ENCODE measurements at regions of chr19 and their contacts with region 1.

Region 1: DNA sequence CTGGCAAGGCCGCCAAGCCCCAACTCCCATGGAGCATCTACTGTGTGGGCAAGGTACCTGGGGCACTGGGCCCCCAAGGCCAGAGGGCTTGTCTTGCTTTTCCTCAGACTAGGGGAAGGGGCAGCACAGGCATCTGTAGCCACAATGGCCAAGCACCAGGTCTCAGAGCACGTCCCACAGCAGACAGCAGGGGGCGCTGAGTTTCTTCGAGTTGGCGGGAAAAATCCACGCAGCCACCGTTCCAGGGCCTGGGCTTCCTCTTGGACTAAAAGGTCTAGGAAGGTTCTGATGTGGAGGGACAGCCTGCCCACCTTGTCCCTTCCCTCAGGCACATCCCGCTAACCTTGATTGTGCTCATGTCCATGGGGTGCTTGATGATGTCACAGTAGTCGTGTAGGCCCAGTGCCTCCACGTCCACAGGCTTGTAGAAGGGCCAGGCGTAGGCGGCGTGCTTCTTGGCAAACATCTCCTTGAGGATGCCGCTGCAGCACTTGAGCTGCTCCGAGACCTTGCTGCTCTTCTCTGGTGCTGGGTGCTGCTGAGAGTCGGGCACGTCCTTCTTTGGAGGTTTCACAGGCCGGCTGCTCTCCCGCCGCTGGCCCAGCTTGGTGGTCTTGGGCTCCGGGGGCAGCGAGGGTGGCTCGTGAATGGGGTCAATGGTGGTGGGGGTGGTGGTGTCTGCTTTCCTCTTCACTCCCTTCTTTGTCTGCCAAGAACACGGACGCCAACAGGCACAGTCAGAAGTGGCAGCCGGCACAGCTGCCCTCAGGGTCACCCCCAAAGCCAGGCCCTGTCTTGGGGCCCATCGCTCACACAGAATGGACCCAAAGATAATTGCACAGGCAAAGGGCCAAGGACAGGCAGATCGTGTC is 32.0 kb upstream of the EPHX3 start:
- DNase-seq: peak in 1 of 2 donors; percentile 89
- H3K4me3 ChIP-seq: no peak overlapping the region
- H3K27ac ChIP-seq: peak overlapping the region; percentile 69 to 83
- H3K4me1 ChIP-seq: peaks cover 19 to 40% of the 10 kb centered on the region in 2 donors
- H3K27me3 ChIP-seq: no peaks in the 10 kb centered on the region
- CTCF ChIP-seq: peak; percentile 78 to 87 (median 78)

Region 2: GRCh38 chr19:15280915-15281683 is 16.8 kb after region 1 on chr19:
- intact Hi-C with region 1: loop called (anchors 2 kb)
- DNase-seq: peak in 1 of 2 donors; percentile 84
- H3K4me3 ChIP-seq: no peak overlapping the region
- H3K27ac ChIP-seq: peak overlapping the region; percentile 71 to 73
- H3K4me1 ChIP-seq: peaks cover 37 to 95% of the 10 kb centered on the region in 2 donors
- H3K27me3 ChIP-seq: no peaks in the 10 kb centered on the region
- CTCF ChIP-seq: peak in 2 of 3 experiments; percentile 21 to 23

Measured in ascending aorta (tissue), 2 donors.